ENCODE measurements at regions of chrX and their contacts with region 1.

Region 1: GRCh38 chrX:86421771-86422170 is 273.5 kb downstream of the DACH2 start:
- DNase-seq: no peak

Region 2: GRCh38 chrX:85365370-85365995 is 1056.3 kb before region 1 on chrX:
- intact Hi-C with region 1: loop called in 1 of 2 experiments (anchors 10 kb)
- DNase-seq: no peak

Region 3: DNA sequence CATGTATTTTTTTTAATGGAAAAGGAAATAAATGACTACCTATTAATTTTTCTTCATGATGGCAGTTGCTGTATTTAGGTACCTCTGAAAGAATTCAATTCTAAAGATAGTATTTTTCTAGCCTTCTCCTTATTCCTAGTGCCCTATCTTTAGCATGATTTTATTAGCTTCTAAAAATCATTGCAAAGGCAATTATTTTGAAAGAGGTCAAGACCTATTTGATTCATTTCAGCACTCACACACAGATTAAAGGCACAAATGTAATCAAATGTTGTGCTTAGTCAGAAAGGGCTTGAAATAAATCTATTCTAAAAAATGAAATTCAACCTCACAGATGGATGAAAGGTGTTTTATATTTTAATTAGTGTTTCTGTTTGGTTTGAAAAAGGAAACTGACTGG is 967.5 kb before region 1 on chrX:
- intact Hi-C with region 1: no loop called
- DNase-seq: no peak

Region 4: DNA sequence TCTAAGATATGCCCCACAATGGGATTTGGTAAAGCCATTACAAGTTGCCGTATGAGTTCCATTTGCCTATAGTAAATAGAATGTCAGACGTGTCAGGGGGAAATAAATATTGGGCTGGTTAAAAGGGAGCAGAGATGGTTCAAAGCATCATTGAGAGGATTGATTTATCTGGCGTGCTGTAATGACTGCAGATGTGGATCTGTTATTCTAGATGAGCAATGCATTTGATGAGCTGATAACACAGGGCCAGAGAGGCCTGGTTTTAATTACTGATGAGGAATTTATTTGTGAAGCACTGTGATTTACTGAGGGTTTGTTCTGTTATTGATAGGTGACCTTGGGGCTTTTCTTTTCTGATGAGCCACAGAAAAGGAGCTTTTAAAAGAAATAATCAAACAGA is 211.0 kb before region 1 on chrX:
- intact Hi-C with region 1: no loop called
- DNase-seq: no peak

Measured in posterior vena cava (tissue), 2 donors.